ENCODE measurements at regions of chr9 and their contacts with region 1.

Region 1: GRCh38 chr9:101530077-101530711 is 3.5 kb upstream of the RNF20 start:
- ATAC-seq: peak in 3 of 8 experiments; percentile 9 to 22 (median 12)
- H3K4me3 ChIP-seq: no peak overlapping the region
- H3K27ac ChIP-seq: no peak overlapping the region
- H3K4me1 ChIP-seq: peaks cover 3 to 9% of the 10 kb centered on the region in 2 donors

Region 2: GRCh38 chr9:101465392-101465791 is 64.8 kb before region 1 on chr9:
- in situ Hi-C with region 1: loop called in 2 of 9 experiments (anchors 5 to 10 kb)
- ATAC-seq: peak in 6 of 8 experiments; percentile 39 to 99 (median 87)
- H3K4me3 ChIP-seq: no peak overlapping the region
- H3K27ac ChIP-seq: no peak overlapping the region
- H3K4me1 ChIP-seq: no peaks in the 10 kb centered on the region